ENCODE measurements at regions of chr1 and their contacts with region 1.

Region 1: DNA sequence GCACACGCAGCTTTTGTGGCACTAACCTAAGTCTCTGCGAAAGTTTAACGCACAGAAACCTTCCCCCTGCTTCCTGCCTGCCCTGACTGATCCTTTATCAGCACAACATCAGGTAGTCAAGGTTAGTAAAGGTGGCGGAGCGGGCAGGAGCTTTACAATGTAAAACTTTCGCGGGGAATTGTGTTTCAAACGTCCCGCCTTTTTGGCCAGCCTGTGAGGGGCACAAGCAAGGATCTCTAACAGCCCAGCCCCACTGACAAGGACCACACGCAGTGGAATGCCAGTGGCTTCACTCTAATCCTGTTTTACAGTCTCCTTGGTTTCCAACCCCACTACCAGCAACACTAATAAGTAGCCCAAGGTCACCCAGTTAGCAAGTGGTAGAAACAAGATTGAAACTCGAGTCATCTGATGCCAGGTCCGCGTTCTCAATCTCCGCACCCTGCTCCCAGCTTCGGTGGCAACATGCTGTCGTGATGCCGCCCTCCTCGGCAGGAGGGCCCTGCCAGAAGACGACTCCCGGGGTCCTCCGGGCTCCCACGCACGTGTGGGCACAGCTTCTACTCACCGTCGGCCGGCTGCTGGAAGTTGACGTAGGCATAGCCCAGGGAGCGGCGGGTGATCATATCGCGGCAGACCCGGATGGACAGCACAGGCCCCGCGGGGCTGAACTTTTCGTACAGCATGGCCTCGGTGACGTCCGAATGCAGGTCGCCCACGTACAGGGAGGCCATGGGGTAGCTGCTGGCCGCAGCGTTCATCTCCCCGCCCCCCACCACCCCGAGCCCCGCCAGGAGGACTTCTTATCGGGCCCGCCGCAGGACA is 1.2 kb downstream of the PABPC4 start:
- DNase-seq: peak; percentile 32
- H3K4me3 Mint-ChIP-seq: peak overlapping the region; percentile 91
- H3K27ac Mint-ChIP-seq: peak overlapping the region; percentile 87
- H3K4me1 Mint-ChIP-seq: peaks cover 39% of the 10 kb centered on the region
- H3K27me3 Mint-ChIP-seq: no peaks in the 10 kb centered on the region

Region 2: GRCh38 chr1:39189592-39190041 is 385.8 kb before region 1 on chr1:
- intact Hi-C with region 1: loop called (anchors 5 kb)
- DNase-seq: no peak
- H3K4me3 Mint-ChIP-seq: no peak overlapping the region
- H3K27ac Mint-ChIP-seq: peak overlapping the region; percentile 91
- H3K4me1 Mint-ChIP-seq: peaks cover 74% of the 10 kb centered on the region
- H3K27me3 Mint-ChIP-seq: no peaks in the 10 kb centered on the region

Region 3: GRCh38 chr1:39653546-39654031 is 78.2 kb after region 1 on chr1:
- intact Hi-C with region 1: loop called (anchors 2 kb)
- DNase-seq: peak; percentile 60
- H3K4me3 Mint-ChIP-seq: no peak overlapping the region
- H3K27ac Mint-ChIP-seq: no peak overlapping the region
- H3K4me1 Mint-ChIP-seq: peaks cover 20% of the 10 kb centered on the region
- H3K27me3 Mint-ChIP-seq: no peaks in the 10 kb centered on the region